ENCODE measurements at regions of chr2 and their contacts with region 1.

Region 1: DNA sequence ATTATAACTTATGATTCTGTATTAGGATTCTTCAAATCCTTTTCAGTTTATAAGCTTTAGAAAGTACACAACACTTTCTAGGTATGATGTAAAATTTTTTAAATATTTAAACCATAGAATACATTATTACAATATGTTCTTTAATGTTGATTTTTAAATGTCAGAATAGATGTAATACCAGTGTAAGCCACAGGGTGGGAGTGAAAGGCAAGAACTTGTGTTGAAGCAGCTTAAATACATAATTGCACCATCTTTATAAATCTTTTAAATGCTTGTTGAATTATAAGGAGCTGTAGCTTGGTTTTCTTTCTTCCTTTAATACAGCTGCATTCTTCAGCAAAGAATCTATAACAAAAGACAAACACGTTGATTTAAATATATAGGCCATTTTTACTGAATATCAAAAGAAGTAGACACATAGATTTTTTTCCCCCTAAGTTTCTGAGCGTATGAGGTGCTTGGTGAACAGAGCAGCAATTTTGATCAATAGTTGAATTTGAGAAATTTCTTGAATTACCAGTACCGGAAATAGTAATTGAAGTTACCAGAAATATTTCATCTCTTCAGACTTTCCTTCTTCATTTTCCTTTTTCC is 63.0 kb downstream of the TANK start:
- DNase-seq: no peak
- H3K4me3 ChIP-seq: no peak overlapping the region
- H3K27ac ChIP-seq: no peak overlapping the region
- H3K4me1 ChIP-seq: no peaks in the 10 kb centered on the region
- H3K27me3 ChIP-seq: no peaks in the 10 kb centered on the region
- CTCF ChIP-seq: peak in 2 of 3 experiments; percentile 25 to 45; a peak in 2 of 4 replicates
- EP300 ChIP-seq: no peak
- POLR2A ChIP-seq: no peak
- RAD21 ChIP-seq: peak; percentile 60 to 69

Region 2: DNA sequence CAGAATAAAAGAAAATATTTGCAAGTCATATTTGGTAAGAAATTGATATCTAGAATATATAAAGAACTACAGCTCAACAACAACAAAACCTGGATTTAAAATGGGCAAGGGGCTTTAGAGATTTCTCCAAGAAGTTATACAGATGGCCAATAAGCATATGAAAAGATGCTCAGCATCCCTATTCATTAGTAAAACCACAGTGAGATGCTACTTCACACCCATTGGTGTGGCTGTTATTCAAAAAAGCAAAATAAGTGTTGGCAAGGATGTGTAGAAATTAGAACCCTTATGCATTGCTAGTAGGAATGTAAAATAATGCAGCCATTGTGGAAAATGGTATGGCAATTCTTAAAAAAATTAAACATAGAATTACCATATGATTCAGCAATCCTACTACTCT is 33.2 kb before region 1 on chr2:
- CTCF ChIA-PET with region 1: no interaction called
- POLR2A ChIA-PET with region 1: no interaction called
- DNase-seq: no peak
- H3K4me3 ChIP-seq: peak overlapping the region in 1 of 4 experiments; percentile 18; a peak in 1 of 8 replicates
- H3K27ac ChIP-seq: no peak overlapping the region
- H3K4me1 ChIP-seq: peaks cover 0 to 11% (median under 1%) of the 10 kb centered on the region in 4 experiments; a peak in 2 of 7 replicates
- H3K27me3 ChIP-seq: no peaks in the 10 kb centered on the region
- CTCF ChIP-seq: no peak
- EP300 ChIP-seq: no peak
- POLR2A ChIP-seq: no peak
- RAD21 ChIP-seq: no peak

Region 3: GRCh38 chr2:161208527-161209139 is 14.6 kb before region 1 on chr2:
- CTCF ChIA-PET with region 1: no interaction called
- POLR2A ChIA-PET with region 1: no interaction called
- DNase-seq: no peak
- H3K4me3 ChIP-seq: no peak overlapping the region
- H3K27ac ChIP-seq: no peak overlapping the region
- H3K4me1 ChIP-seq: no peaks in the 10 kb centered on the region
- H3K27me3 ChIP-seq: no peaks in the 10 kb centered on the region
- CTCF ChIP-seq: no peak
- EP300 ChIP-seq: no peak
- POLR2A ChIP-seq: no peak
- RAD21 ChIP-seq: no peak

Region 4: DNA sequence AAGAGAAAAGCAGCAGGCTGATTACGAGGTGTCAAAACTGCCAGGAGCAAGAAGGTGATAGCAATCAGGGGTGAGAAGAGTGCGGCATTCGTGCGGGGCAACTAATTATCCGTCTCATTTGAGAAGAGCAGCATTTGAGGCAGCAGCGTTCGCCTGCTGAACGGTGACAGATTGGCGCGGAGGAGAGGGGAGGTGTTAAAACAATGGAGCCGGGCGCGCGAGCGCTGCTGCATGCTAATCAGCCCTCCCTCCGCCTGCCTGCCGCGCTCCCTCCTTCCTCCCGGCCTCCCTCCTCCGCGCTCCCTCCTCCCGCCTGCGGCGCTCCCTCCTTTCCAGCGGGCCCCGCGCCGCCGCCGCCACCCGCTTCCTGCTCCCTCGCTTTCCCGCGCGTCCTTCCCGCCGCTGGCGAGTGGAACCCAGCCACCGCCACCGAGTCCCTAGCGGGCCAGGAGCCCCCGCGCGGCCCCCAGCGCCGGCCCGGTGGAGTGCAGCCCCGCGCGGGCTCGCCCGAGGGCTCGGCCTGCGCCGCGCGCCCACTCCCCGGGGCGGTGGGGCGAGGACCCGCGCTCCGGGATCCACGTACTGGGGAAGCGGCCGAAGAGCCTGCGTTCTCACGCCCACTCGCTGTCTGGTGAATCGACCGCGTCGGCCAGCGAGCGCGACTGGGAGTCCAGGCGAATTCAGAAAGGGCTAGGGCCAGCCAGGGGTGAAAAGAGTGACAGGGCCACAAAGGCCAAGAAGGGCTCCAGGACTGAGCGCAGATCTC is 15.5 kb after region 1 on chr2:
- CTCF ChIA-PET with region 1: interaction called, 27 read pairs
- POLR2A ChIA-PET with region 1: interaction called, 3 read pairs
- DNase-seq: peak; percentile 65 to 87
- H3K4me3 ChIP-seq: peak overlapping the region; percentile 52 to 79 (median 68)
- H3K27ac ChIP-seq: no peak overlapping the region
- H3K4me1 ChIP-seq: peaks cover 0 to 9% (median 3%) of the 10 kb centered on the region in 4 experiments; a peak in 6 of 7 replicates
- H3K27me3 ChIP-seq: peaks cover 1 to 48% (median 24%) of the 10 kb centered on the region in 4 experiments
- CTCF ChIP-seq: no peak
- EP300 ChIP-seq: peak in 1 of 2 experiments; percentile 15; a peak in 2 of 3 replicates
- POLR2A ChIP-seq: no peak
- RAD21 ChIP-seq: no peak

Region 5: GRCh38 chr2:161273038-161273760 is 50.0 kb after region 1 on chr2:
- CTCF ChIA-PET with region 1: interaction called, 25 read pairs
- POLR2A ChIA-PET with region 1: no interaction called
- DNase-seq: no peak
- H3K4me3 ChIP-seq: no peak overlapping the region
- H3K27ac ChIP-seq: no peak overlapping the region
- H3K4me1 ChIP-seq: no peaks in the 10 kb centered on the region
- H3K27me3 ChIP-seq: no peaks in the 10 kb centered on the region
- CTCF ChIP-seq: peak in 2 of 3 experiments; percentile 45 to 63; a peak in 2 of 4 replicates
- EP300 ChIP-seq: no peak
- POLR2A ChIP-seq: no peak
- RAD21 ChIP-seq: peak; percentile 68 to 80

Measured in H1 (cell line).